Activated B cell treated with CpG ODN at 0.5 μM for 24 hours (primary cell): ENCODE measurements at regions of chr7 and their contacts with region 1.

Region 1: GRCh38 chr7:22001345-22002004 is 55.8 kb upstream of the CDCA7L start:
- DNase-seq: no peak
- ATAC-seq: peak; percentile 84
- H3K4me3 Mint-ChIP-seq: peak overlapping the region; percentile 39
- H3K27ac Mint-ChIP-seq: no peak overlapping the region
- H3K4me1 Mint-ChIP-seq: peaks cover 6% of the 10 kb centered on the region
- H3K27me3 Mint-ChIP-seq: peaks cover 3% of the 10 kb centered on the region
- CTCF ChIP-seq: peak; percentile 39

Region 2: DNA sequence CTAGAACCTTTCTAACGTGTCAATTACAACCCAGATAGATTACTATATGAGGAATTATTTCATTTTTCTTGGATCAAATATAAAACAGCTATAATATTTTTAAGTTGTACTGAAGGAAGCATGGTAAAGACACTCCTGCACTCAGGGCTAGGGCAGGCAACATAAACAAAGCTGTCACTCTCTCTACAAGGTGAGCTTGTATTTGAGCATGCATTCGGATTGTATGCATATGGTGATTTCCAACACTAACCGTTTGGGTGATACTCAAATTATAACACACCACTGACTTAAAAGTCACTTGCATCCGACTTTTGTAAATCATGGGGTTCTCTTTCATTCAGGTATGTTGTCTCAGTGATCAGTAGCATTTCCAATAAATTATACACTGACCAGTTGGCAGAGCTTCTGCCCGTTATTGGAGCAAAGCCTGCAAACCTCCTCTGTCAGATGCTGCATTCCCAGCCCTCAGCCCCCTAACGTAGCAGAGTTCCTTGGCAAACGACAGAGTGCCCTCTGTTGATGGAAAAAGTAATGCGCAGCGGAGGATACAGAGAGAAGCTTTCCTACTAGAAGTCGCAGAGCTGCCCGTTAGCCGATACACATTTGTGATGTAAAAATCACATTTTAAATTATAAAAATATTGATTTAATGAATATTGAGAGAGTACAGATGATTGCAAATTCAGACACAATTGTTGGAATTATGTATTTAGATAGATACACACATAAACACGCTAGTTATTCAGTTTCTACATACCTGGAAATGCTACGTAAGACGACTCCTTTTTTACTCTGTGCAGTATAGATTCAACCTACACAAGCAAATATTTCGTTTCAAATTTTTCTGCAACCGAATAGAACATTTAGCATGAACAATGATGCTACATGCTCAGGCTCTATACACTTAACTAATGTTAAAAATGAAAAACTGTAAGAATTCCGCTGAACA is 747.5 kb before region 1 on chr7:
- CTCF ChIA-PET with region 1: interaction called, 12 read pairs
- POLR2A ChIA-PET with region 1: no interaction called
- intact Hi-C with region 1: loop called (anchors 1 kb)
- DNase-seq: no peak
- ATAC-seq: no peak
- H3K4me3 Mint-ChIP-seq: no peak overlapping the region
- H3K27ac Mint-ChIP-seq: no peak overlapping the region
- H3K4me1 Mint-ChIP-seq: no peaks in the 10 kb centered on the region
- H3K27me3 Mint-ChIP-seq: peaks cover 37% of the 10 kb centered on the region
- CTCF ChIP-seq: no peak

Region 3: DNA sequence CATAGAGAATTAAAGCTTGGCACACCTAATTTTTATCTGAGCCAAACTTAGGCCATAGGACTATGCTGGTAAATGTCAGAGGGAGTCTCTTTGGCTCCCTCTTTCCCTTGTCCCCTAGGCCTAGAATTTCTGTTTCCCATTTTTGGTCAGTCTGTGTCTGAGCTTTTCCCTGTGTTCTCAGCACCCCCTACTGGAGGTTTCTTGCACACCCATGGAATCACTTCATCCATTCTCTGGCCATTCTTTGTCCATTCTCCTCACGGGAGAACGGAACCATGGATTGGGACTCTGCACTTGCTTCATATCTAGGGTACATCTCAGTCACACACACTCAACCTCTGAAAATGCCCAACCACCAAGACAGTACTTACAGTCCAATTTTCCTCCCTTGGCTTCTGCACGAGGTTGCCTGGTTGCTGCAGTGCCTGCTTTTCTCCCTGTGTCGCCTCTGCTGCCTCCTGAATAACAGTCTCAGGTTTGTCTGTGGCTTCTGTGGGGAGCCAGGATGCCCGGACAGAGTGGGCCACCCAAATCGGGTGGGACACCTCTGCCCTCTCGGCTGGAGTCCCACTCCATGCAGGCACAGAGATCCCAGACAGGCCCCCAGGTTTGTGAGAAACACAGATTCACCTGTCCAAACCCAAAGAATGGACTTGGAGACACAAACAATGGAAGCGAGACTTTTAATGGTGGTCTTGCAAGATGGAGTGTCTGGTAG is 493.7 kb before region 1 on chr7:
- CTCF ChIA-PET with region 1: interaction called, 5 read pairs
- POLR2A ChIA-PET with region 1: no interaction called
- intact Hi-C with region 1: loop called (anchors 5 kb)
- DNase-seq: no peak
- ATAC-seq: no peak
- H3K4me3 Mint-ChIP-seq: no peak overlapping the region
- H3K27ac Mint-ChIP-seq: no peak overlapping the region
- H3K4me1 Mint-ChIP-seq: no peaks in the 10 kb centered on the region
- H3K27me3 Mint-ChIP-seq: no peaks in the 10 kb centered on the region
- CTCF ChIP-seq: no peak

Region 4: GRCh38 chr7:21568762-21569161 is 432.7 kb before region 1 on chr7:
- CTCF ChIA-PET with region 1: interaction called, 4 read pairs
- POLR2A ChIA-PET with region 1: no interaction called
- intact Hi-C with region 1: loop called (anchors 1 kb)
- DNase-seq: no peak
- ATAC-seq: no peak
- H3K4me3 Mint-ChIP-seq: no peak overlapping the region
- H3K27ac Mint-ChIP-seq: no peak overlapping the region
- H3K4me1 Mint-ChIP-seq: no peaks in the 10 kb centered on the region
- H3K27me3 Mint-ChIP-seq: peaks cover 19% of the 10 kb centered on the region
- CTCF ChIP-seq: no peak

Region 5: GRCh38 chr7:21767300-21767900 is 234.1 kb before region 1 on chr7:
- CTCF ChIA-PET with region 1: no interaction called
- POLR2A ChIA-PET with region 1: no interaction called
- intact Hi-C with region 1: loop called (anchors 1 kb)
- DNase-seq: no peak
- ATAC-seq: peak; percentile 47
- H3K4me3 Mint-ChIP-seq: no peak overlapping the region
- H3K27ac Mint-ChIP-seq: no peak overlapping the region
- H3K4me1 Mint-ChIP-seq: no peaks in the 10 kb centered on the region
- H3K27me3 Mint-ChIP-seq: peaks cover 11% of the 10 kb centered on the region
- CTCF ChIP-seq: no peak

Region 6: DNA sequence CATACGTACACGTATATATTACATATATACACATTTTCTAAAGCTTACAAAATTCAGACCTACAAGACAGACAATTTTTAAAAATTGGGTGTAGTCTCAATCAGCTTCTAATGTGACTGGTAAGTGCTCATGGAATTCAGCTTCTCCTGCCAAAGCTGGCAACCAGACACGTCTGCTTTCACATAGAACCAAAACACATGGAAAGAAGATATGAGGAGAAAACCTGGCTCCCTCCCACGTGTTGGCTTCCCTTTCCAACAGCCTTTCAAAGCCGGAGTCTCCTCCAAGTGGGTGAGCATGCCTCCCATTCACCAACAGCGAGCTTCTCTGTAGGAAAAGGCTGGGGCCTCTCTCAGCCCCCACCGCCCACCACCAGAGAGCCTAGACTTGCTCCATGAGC is 89.2 kb before region 1 on chr7:
- CTCF ChIA-PET with region 1: no interaction called
- POLR2A ChIA-PET with region 1: no interaction called
- intact Hi-C with region 1: loop called (anchors 1 kb)
- DNase-seq: no peak
- ATAC-seq: no peak
- H3K4me3 Mint-ChIP-seq: no peak overlapping the region
- H3K27ac Mint-ChIP-seq: peak overlapping the region; percentile 74
- H3K4me1 Mint-ChIP-seq: peaks cover 43% of the 10 kb centered on the region
- H3K27me3 Mint-ChIP-seq: no peaks in the 10 kb centered on the region
- CTCF ChIP-seq: no peak

Region 7: DNA sequence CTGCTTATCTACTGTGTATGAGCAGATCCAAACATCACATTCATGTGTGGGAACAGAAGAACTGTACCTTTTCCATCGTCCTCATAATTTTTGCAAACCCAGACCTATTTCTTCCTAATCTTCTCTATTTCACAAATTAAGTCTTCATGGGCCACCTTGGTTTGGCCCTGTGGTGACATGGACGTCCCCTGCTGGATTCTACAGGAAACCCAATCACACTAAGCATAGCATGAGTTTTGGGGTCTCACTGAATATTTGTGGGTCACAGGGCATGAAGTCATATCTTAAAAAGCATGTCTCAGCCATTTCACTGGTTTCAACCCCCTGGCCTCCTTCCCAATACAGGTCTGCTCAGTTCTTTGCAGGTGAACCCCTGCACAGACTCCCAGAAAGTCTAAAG is 20.0 kb before region 1 on chr7:
- CTCF ChIA-PET with region 1: no interaction called
- POLR2A ChIA-PET with region 1: no interaction called
- intact Hi-C with region 1: no loop called
- DNase-seq: no peak
- ATAC-seq: no peak
- H3K4me3 Mint-ChIP-seq: no peak overlapping the region
- H3K27ac Mint-ChIP-seq: no peak overlapping the region
- H3K4me1 Mint-ChIP-seq: no peaks in the 10 kb centered on the region
- H3K27me3 Mint-ChIP-seq: no peaks in the 10 kb centered on the region
- CTCF ChIP-seq: no peak

Region 8: GRCh38 chr7:22082886-22083703 is 81.6 kb after region 1 on chr7:
- CTCF ChIA-PET with region 1: interaction called, 5 read pairs
- POLR2A ChIA-PET with region 1: no interaction called
- intact Hi-C with region 1: loop called (anchors 5 kb)
- DNase-seq: peak; percentile 91
- ATAC-seq: peak; percentile 97
- H3K4me3 Mint-ChIP-seq: peak overlapping the region; percentile 89
- H3K27ac Mint-ChIP-seq: peak overlapping the region; percentile 70
- H3K4me1 Mint-ChIP-seq: peaks cover 13% of the 10 kb centered on the region
- H3K27me3 Mint-ChIP-seq: peaks cover 25% of the 10 kb centered on the region
- CTCF ChIP-seq: peak; percentile 83